WTC11 (cell line): ENCODE measurements at regions of chr17 and their contacts with region 1.

Region 1: GRCh38 chr17:70060415-70060814 is 14.6 kb upstream of the KCNJ16 start:
- DNase-seq: no peak
- ATAC-seq: no peak
- H3K4me3 Mint-ChIP-seq: no peak overlapping the region
- H3K27ac Mint-ChIP-seq: no peak overlapping the region
- H3K4me1 Mint-ChIP-seq: peaks cover 7% of the 10 kb centered on the region
- H3K27me3 Mint-ChIP-seq: no peaks in the 10 kb centered on the region
- CTCF ChIP-seq: no peak

Region 2: DNA sequence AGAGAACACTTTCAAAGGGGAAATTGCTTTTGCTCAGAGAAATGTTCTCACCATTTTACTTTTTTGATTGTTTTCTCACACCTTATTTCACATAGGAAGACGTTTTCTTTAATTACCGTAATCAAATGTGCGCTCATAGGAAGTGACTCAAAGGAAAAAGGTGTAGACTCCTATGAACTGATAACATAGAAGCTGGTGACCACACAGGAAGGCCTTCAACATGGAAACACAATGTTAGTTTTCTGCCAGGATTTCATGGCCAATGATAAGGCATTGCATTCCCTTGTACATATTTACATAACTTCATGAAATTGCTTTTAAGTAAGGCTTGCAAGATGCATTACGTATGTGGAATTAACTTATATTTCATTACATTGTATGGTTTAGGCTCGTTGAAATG is 26.3 kb before region 1 on chr17:
- CTCF ChIA-PET with region 1: no interaction called
- POLR2A ChIA-PET with region 1: no interaction called
- DNase-seq: no peak
- ATAC-seq: no peak
- H3K4me3 Mint-ChIP-seq: no peak overlapping the region
- H3K27ac Mint-ChIP-seq: no peak overlapping the region
- H3K4me1 Mint-ChIP-seq: peaks cover 7% of the 10 kb centered on the region
- H3K27me3 Mint-ChIP-seq: no peaks in the 10 kb centered on the region
- CTCF ChIP-seq: no peak

Region 3: DNA sequence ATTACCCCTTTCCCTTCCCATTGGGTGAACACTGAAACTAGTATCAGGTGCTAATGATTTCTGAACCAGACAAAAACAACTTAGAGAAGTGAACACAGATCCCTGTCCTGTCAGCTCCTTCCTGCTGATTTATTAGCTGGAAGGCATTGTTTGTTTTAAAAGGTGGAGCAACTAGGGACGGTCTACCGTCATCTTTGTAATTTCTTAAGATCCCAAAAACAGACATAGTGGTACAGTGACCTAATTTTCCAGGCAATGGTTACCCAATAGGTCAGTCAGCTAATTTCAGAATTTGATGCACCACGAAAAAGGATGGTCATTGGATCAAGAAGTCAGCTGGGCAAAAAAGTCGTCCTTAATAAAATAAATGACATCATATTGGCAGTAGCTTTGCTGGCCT is 12.8 kb before region 1 on chr17:
- CTCF ChIA-PET with region 1: no interaction called
- POLR2A ChIA-PET with region 1: no interaction called
- DNase-seq: no peak
- ATAC-seq: no peak
- H3K4me3 Mint-ChIP-seq: no peak overlapping the region
- H3K27ac Mint-ChIP-seq: no peak overlapping the region
- H3K4me1 Mint-ChIP-seq: no peaks in the 10 kb centered on the region
- H3K27me3 Mint-ChIP-seq: no peaks in the 10 kb centered on the region
- CTCF ChIP-seq: no peak

Region 4: DNA sequence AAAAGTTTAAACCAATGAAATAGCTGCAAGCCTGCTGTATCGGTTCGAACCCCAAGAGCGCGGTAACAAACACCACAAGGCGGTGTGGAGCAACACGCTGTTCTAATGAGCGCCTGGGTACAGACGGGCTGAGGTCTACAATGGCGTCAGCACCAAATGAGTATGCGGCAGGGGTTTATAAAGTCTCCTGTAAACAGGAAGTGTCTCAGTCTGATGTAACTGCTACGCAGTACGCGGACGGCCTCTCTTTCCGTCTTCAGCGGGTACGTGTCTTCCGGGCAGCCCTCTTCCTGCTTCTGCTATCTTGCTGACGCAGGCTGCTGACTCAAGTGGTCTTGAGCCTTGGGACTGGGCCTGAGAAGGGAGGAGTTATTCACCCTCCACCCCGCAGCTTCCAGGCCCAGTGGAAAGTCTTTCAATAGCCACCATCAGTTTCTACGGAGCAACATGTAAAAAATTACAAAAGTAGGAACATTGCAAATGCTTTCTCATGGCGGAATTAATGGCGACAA is 68.4 kb after region 1 on chr17:
- CTCF ChIA-PET with region 1: interaction called, 4 read pairs
- POLR2A ChIA-PET with region 1: interaction called, 15 read pairs
- DNase-seq: no peak
- ATAC-seq: 0 out of 2 replicates have a peak, but pooled peaks have one; percentile 24
- H3K4me3 Mint-ChIP-seq: no peak overlapping the region
- H3K27ac Mint-ChIP-seq: peak overlapping the region; percentile 17; the same call in 1 of the 2 replicates
- H3K4me1 Mint-ChIP-seq: peaks cover 11% of the 10 kb centered on the region
- H3K27me3 Mint-ChIP-seq: no peaks in the 10 kb centered on the region
- CTCF ChIP-seq: no peak

Region 5: DNA sequence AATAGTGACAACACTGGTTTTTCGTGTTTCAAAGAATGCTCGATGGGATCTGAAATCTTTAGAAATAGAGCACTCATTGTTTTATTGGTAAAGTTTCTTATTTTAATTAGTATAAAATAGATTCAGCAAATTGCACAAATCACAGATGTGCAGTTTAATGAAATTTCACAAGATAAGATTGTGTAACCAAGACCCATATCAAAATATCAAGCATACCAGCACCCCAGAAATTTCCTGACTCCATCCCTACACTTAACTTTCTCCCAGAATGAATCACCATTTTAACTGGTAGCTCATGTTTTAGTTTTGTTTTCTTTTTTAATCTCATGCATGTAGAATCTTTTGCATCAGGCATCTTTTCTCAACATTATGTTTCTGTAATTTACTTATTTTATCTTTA is 294.8 kb after region 1 on chr17:
- CTCF ChIA-PET with region 1: no interaction called
- POLR2A ChIA-PET with region 1: no interaction called
- DNase-seq: no peak
- ATAC-seq: no peak
- H3K4me3 Mint-ChIP-seq: no peak overlapping the region
- H3K27ac Mint-ChIP-seq: no peak overlapping the region
- H3K4me1 Mint-ChIP-seq: no peaks in the 10 kb centered on the region
- H3K27me3 Mint-ChIP-seq: no peaks in the 10 kb centered on the region; the same call in 1 of the 2 replicates
- CTCF ChIP-seq: no peak